ENCODE measurements at regions of chr3 and their contacts with region 1.

Region 1: GRCh38 chr3:153338487-153338886 is 176.5 kb downstream of the RAP2B start:
- DNase-seq: peak; percentile 59
- ATAC-seq: peak; percentile 56; the same call in 1 of the 2 replicates
- H3K4me3 ChIP-seq: no peak overlapping the region
- H3K27ac ChIP-seq: no peak overlapping the region
- H3K4me1 ChIP-seq: no peaks in the 10 kb centered on the region
- H3K27me3 ChIP-seq: no peaks in the 10 kb centered on the region
- CTCF ChIP-seq: no peak
- POLR2A ChIP-seq: no peak
- RAD21 ChIP-seq: no peak

Region 2: GRCh38 chr3:153357436-153357835 is 18.9 kb after region 1 on chr3:
- CTCF ChIA-PET with region 1: no interaction called
- POLR2A ChIA-PET with region 1: interaction called, 12 read pairs
- dilution Hi-C with region 1: no loop called
- in situ Hi-C with region 1: no loop called
- intact Hi-C with region 1: no loop called
- DNase-seq: no peak
- ATAC-seq: no peak
- H3K4me3 ChIP-seq: no peak overlapping the region
- H3K27ac ChIP-seq: no peak overlapping the region
- H3K4me1 ChIP-seq: no peaks in the 10 kb centered on the region
- H3K27me3 ChIP-seq: peaks cover 3% of the 10 kb centered on the region; the same call in 1 of the 2 replicates
- CTCF ChIP-seq: no peak
- POLR2A ChIP-seq: no peak
- RAD21 ChIP-seq: no peak

Region 3: GRCh38 chr3:154862265-154862664 is 1523.8 kb after region 1 on chr3:
- CTCF ChIA-PET with region 1: no interaction called
- POLR2A ChIA-PET with region 1: no interaction called
- dilution Hi-C with region 1: no loop called
- in situ Hi-C with region 1: no loop called
- intact Hi-C with region 1: no loop called
- DNase-seq: peak; percentile 70
- ATAC-seq: peak; percentile 27; the same call in 1 of the 2 replicates
- H3K4me3 ChIP-seq: no peak overlapping the region
- H3K27ac ChIP-seq: no peak overlapping the region
- H3K4me1 ChIP-seq: peaks cover 1% of the 10 kb centered on the region; the same call in 1 of the 2 replicates
- H3K27me3 ChIP-seq: no peaks in the 10 kb centered on the region
- CTCF ChIP-seq: no peak
- POLR2A ChIP-seq: no peak
- RAD21 ChIP-seq: no peak

Measured in IMR-90 (cell line).